H1 (cell line): ENCODE measurements at regions of chr20 and their contacts with region 1.

Region 1: DNA sequence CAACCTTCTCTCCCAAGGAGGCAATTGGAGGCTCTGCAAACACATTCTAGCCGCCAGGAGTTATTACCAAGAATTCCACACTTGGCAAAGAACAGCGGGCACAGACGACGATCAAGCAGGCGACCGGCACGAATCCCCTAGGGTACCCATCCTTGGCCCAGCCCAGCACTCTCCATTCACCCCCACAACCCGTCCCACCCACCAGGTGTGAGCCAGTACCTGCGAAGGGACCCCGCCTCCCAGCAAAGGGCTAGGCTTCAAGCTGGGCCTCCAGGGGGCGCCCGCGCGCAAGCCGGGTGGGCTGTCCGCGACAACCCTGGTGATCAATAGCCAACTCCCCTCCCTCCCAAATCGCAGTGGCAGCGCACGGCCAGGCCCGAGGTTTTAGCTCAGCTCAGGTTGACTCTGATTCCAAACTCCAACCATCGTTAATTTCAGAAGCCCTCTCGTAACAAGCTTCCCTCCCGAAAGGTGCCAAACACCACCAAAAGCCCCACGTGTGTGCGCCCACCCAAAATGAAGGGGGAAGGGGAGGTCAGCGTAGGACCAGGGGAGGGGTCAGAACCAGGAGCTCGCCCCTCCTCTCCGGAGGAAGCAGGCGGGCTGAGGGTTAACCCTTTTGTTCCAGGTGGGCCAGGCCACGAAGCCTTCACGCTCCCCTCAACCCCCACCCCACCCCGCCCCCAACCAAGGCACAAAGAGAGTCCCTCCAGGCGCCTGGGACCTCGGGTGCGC is 2.1 kb downstream of the SALL4 start:
- DNase-seq: peak; percentile 82 to 100
- H3K4me3 ChIP-seq: peak overlapping the region; percentile 90 to 99 (median 94)
- H3K27ac ChIP-seq: peak overlapping the region; percentile 96
- H3K4me1 ChIP-seq: peaks cover 5 to 14% (median 13%) of the 10 kb centered on the region in 4 experiments
- H3K27me3 ChIP-seq: no peaks in the 10 kb centered on the region
- CTCF ChIP-seq: peak; percentile 81 to 91 (median 88)
- EP300 ChIP-seq: peak in 1 of 2 experiments; percentile 36; a peak in 1 of 3 replicates
- POLR2A ChIP-seq: peak; percentile 61 to 89; a peak in 2 of 3 replicates
- RAD21 ChIP-seq: peak; percentile 71 to 79

Region 2: DNA sequence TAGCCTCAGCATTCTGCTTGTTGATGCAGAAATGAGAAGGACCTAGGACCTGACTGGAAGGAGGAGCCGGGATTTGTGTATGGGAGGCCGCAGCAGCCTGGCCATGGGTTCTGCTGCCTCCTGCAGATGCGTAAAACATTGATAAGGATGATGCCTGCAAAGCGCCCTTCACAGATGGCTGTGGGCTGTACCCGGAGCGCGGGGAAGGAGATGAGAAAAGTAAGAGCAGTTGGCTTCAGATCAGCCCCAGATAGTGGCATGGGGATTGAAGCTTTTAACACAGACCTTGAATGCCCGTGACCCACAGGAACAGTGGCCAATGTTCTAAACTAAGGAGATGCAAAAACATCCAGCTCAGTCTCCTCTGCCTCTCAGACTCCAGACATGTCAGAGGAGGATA is 640.9 kb before region 1 on chr20:
- CTCF ChIA-PET with region 1: no interaction called
- POLR2A ChIA-PET with region 1: no interaction called
- DNase-seq: peak in 1 of 2 experiments; percentile 33
- H3K4me3 ChIP-seq: no peak overlapping the region
- H3K27ac ChIP-seq: no peak overlapping the region
- H3K4me1 ChIP-seq: no peaks in the 10 kb centered on the region
- H3K27me3 ChIP-seq: no peaks in the 10 kb centered on the region
- CTCF ChIP-seq: no peak
- EP300 ChIP-seq: no peak
- POLR2A ChIP-seq: no peak
- RAD21 ChIP-seq: no peak

Region 3: DNA sequence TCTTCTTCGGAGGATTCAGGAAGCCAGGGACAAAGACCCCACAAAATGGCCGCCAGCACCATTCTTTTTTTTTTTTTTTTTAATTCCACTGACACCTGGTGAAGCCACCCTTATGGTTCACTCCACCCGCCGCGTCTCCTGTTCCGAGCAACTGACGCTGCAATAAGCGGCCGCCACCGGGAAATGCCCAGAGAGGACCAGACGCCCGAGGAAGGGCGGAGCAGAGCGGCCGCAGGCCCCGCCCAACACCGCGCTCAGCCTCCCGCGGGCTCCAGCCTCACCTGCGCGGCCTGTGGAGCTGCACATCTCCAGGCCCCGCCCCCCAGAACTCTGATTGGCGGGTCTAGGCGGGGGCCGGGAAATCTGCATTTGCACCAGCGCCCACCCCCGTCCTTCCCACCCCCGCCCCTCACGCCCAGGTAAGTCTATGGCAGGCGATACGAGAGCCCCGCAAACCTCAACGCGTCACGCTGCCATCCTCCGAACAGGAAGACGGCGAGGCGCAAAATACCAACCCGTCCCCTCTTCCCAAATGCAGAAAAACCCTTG is 33.1 kb before region 1 on chr20:
- CTCF ChIA-PET with region 1: interaction called, 7 read pairs
- POLR2A ChIA-PET with region 1: interaction called, 10 read pairs
- DNase-seq: peak; percentile 67 to 88
- H3K4me3 ChIP-seq: peak overlapping the region; percentile 47 to 73 (median 70)
- H3K27ac ChIP-seq: peak overlapping the region; percentile 26; the same call in 1 of the 2 replicates
- H3K4me1 ChIP-seq: peaks cover 0 to 2% (median 0%) of the 10 kb centered on the region in 4 experiments; a peak in 1 of 7 replicates
- H3K27me3 ChIP-seq: no peaks in the 10 kb centered on the region; a peak in 1 of 7 replicates
- CTCF ChIP-seq: no peak
- EP300 ChIP-seq: no peak
- POLR2A ChIP-seq: peak in 1 of 2 experiments; percentile 35; a peak in 1 of 3 replicates
- RAD21 ChIP-seq: no peak

Region 4: GRCh38 chr20:51810155-51811041 is 10.2 kb after region 1 on chr20:
- CTCF ChIA-PET with region 1: no interaction called
- POLR2A ChIA-PET with region 1: interaction called, 11 read pairs
- DNase-seq: no peak
- H3K4me3 ChIP-seq: no peak overlapping the region
- H3K27ac ChIP-seq: no peak overlapping the region
- H3K4me1 ChIP-seq: peaks cover 4 to 6% (median 5%) of the 10 kb centered on the region in 4 experiments; a peak in 6 of 7 replicates
- H3K27me3 ChIP-seq: no peaks in the 10 kb centered on the region
- CTCF ChIP-seq: peak in 2 of 3 experiments; percentile 14 to 39; a peak in 2 of 4 replicates
- EP300 ChIP-seq: no peak
- POLR2A ChIP-seq: no peak
- RAD21 ChIP-seq: peak in 1 of 2 experiments; percentile 27; a peak in 2 of 4 replicates

Region 5: DNA sequence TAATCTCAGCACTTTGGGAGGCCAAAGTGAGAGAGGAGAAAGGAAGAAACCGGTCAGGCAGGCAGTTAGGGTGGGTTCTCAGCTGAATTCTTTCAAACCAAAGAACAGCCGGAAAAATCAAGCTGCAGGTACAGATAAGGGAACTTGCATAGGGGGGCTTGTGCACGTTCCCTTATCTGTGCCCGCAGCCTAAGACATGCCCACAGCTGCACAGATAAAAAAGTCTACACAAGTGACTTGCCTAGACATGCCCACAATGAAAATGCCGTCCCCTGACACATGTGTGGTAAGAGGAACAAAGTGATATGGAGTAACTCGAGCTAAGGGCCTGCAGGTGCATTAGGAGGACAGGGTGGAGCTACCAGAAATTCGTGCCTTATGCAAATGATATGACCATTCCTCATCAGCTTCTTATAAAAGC is 177.9 kb after region 1 on chr20:
- CTCF ChIA-PET with region 1: no interaction called
- POLR2A ChIA-PET with region 1: no interaction called
- DNase-seq: no peak
- H3K4me3 ChIP-seq: no peak overlapping the region
- H3K27ac ChIP-seq: no peak overlapping the region
- H3K4me1 ChIP-seq: no peaks in the 10 kb centered on the region
- H3K27me3 ChIP-seq: no peaks in the 10 kb centered on the region
- CTCF ChIP-seq: no peak
- EP300 ChIP-seq: no peak
- POLR2A ChIP-seq: no peak
- RAD21 ChIP-seq: no peak

Region 6: DNA sequence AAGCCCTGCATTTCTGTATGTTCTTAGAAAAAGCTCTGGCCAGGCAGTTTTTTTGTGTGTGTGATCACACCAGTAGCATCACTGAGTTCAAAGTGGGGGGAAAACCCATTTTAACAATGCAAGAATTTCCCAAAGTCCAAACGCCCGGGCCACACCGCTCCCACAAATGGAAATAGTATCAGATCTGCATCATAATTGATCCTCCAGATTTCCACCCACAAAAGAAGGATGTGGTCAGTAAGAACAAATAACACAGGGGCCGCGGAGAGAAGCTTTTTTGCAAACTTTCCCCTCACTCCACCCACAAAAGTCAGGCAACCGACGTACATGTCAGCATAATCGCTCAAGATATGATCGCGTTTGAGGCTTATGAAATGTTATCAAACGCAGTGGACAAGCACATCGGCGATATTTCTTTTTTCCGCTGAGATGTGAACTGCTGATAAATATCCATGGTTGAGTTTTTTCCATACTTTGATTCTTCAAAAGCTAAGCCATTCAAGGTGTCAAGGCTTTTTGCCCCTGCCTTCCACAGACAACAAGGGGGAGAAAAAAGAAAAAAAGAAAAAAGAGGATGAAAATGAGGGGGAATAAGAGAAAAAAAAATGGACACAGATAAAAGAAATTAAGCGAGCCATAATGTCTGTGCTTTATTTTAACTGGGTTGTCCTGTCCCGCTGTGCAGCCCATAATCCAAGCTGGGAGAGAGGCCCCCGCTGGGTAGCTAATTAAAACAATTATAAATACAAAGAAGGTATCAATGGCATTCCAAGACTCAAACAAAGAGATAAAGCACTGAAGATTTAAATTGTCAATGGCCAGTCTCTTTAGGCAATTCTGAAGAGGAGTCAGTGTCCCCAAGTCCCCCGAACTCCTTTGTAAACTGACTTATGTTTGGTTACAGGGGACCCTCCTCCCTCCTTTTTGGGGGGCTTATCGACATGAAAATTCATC is 247.9 kb after region 1 on chr20:
- CTCF ChIA-PET with region 1: interaction called, 4 read pairs
- POLR2A ChIA-PET with region 1: interaction called, 24 read pairs
- DNase-seq: peak; percentile 56 to 70
- H3K4me3 ChIP-seq: peak overlapping the region; percentile 8 to 52 (median 36); a peak in 5 of 8 replicates
- H3K27ac ChIP-seq: peak overlapping the region; percentile 76
- H3K4me1 ChIP-seq: peaks cover 8 to 22% (median 15%) of the 10 kb centered on the region in 4 experiments
- H3K27me3 ChIP-seq: no peaks in the 10 kb centered on the region
- CTCF ChIP-seq: no peak
- EP300 ChIP-seq: peak in 1 of 2 experiments; percentile 94; a peak in 2 of 3 replicates
- POLR2A ChIP-seq: no peak
- RAD21 ChIP-seq: no peak

Region 7: DNA sequence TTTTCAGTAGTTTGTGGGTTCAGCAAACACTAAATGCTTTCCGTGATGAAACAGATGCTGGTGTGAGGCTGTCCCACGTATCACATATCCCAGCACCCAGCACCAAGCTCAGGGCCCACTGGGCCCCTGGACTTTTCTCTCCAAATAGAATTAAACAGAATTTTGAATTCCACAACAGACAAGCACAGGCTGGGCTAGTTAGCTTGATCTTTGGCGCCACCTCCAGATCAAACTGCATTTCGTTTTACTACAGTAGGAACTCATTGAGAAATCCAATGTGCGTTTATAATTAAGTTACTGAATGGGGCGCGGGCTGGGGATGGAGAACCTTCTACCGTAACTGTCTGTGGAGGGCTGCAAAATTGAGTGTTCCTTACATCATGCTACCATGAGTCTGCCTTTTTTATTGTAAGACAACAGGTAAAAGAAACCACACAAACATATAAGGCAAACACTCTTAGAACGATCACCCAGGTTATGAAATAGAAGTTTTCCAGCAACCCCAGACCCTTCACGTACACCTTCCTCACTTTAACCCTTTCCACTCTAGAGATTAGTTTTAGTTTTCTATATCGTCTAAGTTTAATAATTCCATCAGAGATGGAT is 283.5 kb after region 1 on chr20:
- CTCF ChIA-PET with region 1: interaction called, 12 read pairs
- POLR2A ChIA-PET with region 1: interaction called, 5 read pairs
- DNase-seq: peak; percentile 25 to 74
- H3K4me3 ChIP-seq: no peak overlapping the region
- H3K27ac ChIP-seq: no peak overlapping the region
- H3K4me1 ChIP-seq: peaks cover 0 to 2% (median 0%) of the 10 kb centered on the region in 4 experiments; a peak in 2 of 7 replicates
- H3K27me3 ChIP-seq: no peaks in the 10 kb centered on the region
- CTCF ChIP-seq: peak in 2 of 3 experiments; percentile 72 to 80; a peak in 3 of 4 replicates
- EP300 ChIP-seq: no peak
- POLR2A ChIP-seq: no peak
- RAD21 ChIP-seq: peak; percentile 96 to 97